CD8-positive, alpha-beta T cell (primary cell): ENCODE measurements at regions of chr2 and their contacts with region 1.

Region 1: DNA sequence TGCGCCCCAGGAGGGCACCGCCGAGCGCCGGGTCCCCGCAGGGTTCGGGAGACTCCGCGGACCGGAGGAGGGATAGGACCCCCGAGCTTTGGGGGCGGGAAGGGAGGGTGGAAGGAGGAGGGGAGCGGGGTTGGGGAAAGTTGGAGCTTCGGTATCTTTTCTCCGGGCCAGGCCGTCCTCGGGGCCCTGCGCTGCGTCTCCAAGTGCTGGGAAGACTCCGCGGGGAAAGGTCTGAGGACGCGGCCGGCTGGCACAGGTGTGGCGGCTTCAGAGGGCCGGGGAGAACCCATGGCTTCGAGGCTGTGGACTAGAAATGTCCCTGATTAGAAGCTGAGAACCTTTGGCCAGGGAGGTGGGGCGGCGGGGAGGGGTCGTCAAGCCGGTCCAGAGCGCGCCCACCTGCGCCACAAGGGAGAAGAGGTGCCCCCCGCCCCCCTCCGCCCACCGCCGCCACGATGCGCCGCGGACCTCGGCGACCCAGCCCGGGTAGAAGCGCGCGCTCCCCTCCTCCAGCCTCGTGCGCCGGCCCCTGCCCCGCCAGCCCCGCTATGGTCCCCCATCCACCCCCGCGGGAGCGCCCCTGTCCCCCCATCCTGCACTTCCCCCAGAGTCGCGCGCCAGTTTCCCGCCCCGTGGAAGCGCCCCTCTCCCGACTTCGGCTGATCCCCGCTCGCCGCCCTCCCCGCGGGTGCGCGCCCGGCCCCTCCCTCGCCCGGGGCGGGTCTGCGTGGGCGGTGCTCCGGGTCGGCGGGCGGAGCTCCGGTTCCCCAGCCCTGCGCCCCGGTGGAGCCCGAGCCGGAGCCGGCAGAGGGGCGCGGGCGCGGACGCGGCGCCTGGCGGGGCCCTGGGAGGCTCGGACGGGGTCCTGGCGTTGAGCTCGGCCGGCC is at the start of gene SNTG2:
- DNase-seq: peak; percentile 22 to 78 (median 58)
- ATAC-seq: peak; percentile 92
- H3K4me3 ChIP-seq: peak within 1 kb of the TSS; percentile 47 to 52
- H3K4me3 Mint-ChIP-seq: peak within 1 kb of the TSS; percentile 81
- H3K27ac ChIP-seq: no peak within 1 kb of the TSS
- H3K27ac Mint-ChIP-seq: no peak within 1 kb of the TSS
- H3K4me1 ChIP-seq: peaks cover 14% of the 10 kb centered on the region
- H3K4me1 Mint-ChIP-seq: peaks cover 38% of the 10 kb centered on the region
- H3K27me3 ChIP-seq: peaks cover 0 to 11% of the 10 kb centered on the region in 2 experiments
- H3K27me3 Mint-ChIP-seq: peaks cover 25% of the 10 kb centered on the region
- CTCF ChIP-seq: no peak
- total RNA-seq, gene SNTG2: 5.1 to 5.3 TPM

Region 2: DNA sequence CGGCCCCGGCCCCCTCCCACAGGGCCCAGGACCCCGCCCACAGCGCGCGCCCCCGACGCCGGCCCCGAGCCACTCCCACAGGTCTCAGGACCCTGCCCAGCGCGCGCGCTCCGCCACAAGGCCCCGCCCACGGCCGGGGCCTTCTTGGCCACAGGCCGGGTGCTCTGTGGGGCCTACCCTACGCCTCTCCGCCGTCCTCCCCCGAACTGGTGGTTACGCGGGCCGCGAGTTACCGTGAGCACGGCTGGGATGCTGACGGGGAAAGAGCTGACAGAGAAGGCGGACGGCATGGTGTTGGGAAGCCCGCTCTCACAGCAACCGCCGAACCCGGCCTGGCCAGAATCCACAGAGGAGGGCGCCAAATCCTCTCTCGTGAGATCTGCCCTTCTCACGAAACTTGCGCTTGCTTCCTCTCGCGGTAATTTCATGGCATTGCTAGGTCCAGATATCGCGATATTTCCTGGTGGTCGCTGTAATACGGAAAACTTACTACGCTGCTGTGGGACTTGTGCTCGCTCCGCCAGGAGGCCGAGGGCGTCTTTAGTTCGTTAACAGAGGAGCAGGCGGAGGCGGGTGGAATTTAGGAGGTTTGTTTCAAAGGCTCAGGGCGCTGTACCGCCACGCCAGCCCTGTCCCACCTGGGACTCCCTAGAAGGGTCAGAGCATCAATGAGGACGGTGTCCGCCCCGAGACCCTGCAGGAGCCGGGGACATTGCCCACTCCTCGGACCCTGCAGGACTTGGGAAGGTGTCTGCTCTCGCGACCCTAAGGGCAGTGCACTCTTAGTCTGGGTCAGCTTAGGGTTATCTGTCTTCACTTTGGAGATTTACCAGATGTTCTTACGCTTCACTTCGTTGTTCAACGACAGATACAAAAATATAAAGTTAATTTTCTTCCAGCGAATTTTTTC is 273.0 kb before region 1 on chr2 and contains the start of gene TMEM18:
- CTCF ChIA-PET with region 1: no interaction called
- POLR2A ChIA-PET with region 1: no interaction called
- intact Hi-C with region 1: loop called (anchors 2 kb)
- DNase-seq: peak in 7 of 9 experiments; percentile 80 to 99 (median 98)
- ATAC-seq: peak; percentile 82
- H3K4me3 ChIP-seq: peak within 1 kb of the TSS; percentile 90 to 95
- H3K4me3 Mint-ChIP-seq: peak within 1 kb of the TSS; percentile 95
- H3K27ac ChIP-seq: peak within 1 kb of the TSS; percentile 96 to 100
- H3K27ac Mint-ChIP-seq: peak within 1 kb of the TSS; percentile 99
- H3K4me1 ChIP-seq: peaks cover 19% of the 10 kb centered on the region
- H3K4me1 Mint-ChIP-seq: peaks cover 42% of the 10 kb centered on the region
- H3K27me3 ChIP-seq: no peaks in the 10 kb centered on the region
- H3K27me3 Mint-ChIP-seq: no peaks in the 10 kb centered on the region
- CTCF ChIP-seq: peak; percentile 38
- total RNA-seq, gene TMEM18: 30.7 to 33.6 TPM

Region 3: GRCh38 chr2:789529-789928 is 160.8 kb before region 1 on chr2:
- CTCF ChIA-PET with region 1: no interaction called
- POLR2A ChIA-PET with region 1: no interaction called
- intact Hi-C with region 1: no loop called
- DNase-seq: no peak
- ATAC-seq: no peak
- H3K4me3 ChIP-seq: no peak overlapping the region
- H3K4me3 Mint-ChIP-seq: no peak overlapping the region
- H3K27ac ChIP-seq: no peak overlapping the region
- H3K27ac Mint-ChIP-seq: no peak overlapping the region
- H3K4me1 ChIP-seq: no peaks in the 10 kb centered on the region
- H3K4me1 Mint-ChIP-seq: no peaks in the 10 kb centered on the region
- H3K27me3 ChIP-seq: no peaks in the 10 kb centered on the region
- H3K27me3 Mint-ChIP-seq: no peaks in the 10 kb centered on the region
- CTCF ChIP-seq: no peak

Region 4: GRCh38 chr2:974502-974901 is 24.2 kb after region 1 on chr2:
- CTCF ChIA-PET with region 1: interaction called, 7 read pairs
- POLR2A ChIA-PET with region 1: interaction called, 13 read pairs
- intact Hi-C with region 1: loop called in 1 of 2 experiments (anchors 2 kb)
- DNase-seq: peak in 2 of 9 experiments; percentile 21 to 57
- ATAC-seq: peak; percentile 34
- H3K4me3 ChIP-seq: peak overlapping the region; percentile 27 to 47
- H3K4me3 Mint-ChIP-seq: peak overlapping the region; percentile 78
- H3K27ac ChIP-seq: peak overlapping the region; percentile 51 to 53
- H3K27ac Mint-ChIP-seq: peak overlapping the region; percentile 87
- H3K4me1 ChIP-seq: peaks cover 39% of the 10 kb centered on the region
- H3K4me1 Mint-ChIP-seq: peaks cover 74% of the 10 kb centered on the region
- H3K27me3 ChIP-seq: no peaks in the 10 kb centered on the region
- H3K27me3 Mint-ChIP-seq: no peaks in the 10 kb centered on the region
- CTCF ChIP-seq: no peak

Region 5: GRCh38 chr2:985317-985898 is 35.1 kb after region 1 on chr2:
- CTCF ChIA-PET with region 1: interaction called, 5 read pairs
- POLR2A ChIA-PET with region 1: interaction called, 5 read pairs
- intact Hi-C with region 1: loop called in 1 of 2 experiments (anchors 5 kb)
- DNase-seq: peak in 3 of 9 experiments; percentile 28 to 69 (median 50)
- ATAC-seq: peak; percentile 89
- H3K4me3 ChIP-seq: peak overlapping the region in 1 of 2 experiments; percentile 15
- H3K4me3 Mint-ChIP-seq: peak overlapping the region; percentile 64
- H3K27ac ChIP-seq: peak overlapping the region in 1 of 2 experiments; percentile 16
- H3K27ac Mint-ChIP-seq: peak overlapping the region; percentile 88
- H3K4me1 ChIP-seq: peaks cover 12% of the 10 kb centered on the region
- H3K4me1 Mint-ChIP-seq: peaks cover 33% of the 10 kb centered on the region
- H3K27me3 ChIP-seq: no peaks in the 10 kb centered on the region
- H3K27me3 Mint-ChIP-seq: peaks cover 3% of the 10 kb centered on the region
- CTCF ChIP-seq: no peak

Region 6: DNA sequence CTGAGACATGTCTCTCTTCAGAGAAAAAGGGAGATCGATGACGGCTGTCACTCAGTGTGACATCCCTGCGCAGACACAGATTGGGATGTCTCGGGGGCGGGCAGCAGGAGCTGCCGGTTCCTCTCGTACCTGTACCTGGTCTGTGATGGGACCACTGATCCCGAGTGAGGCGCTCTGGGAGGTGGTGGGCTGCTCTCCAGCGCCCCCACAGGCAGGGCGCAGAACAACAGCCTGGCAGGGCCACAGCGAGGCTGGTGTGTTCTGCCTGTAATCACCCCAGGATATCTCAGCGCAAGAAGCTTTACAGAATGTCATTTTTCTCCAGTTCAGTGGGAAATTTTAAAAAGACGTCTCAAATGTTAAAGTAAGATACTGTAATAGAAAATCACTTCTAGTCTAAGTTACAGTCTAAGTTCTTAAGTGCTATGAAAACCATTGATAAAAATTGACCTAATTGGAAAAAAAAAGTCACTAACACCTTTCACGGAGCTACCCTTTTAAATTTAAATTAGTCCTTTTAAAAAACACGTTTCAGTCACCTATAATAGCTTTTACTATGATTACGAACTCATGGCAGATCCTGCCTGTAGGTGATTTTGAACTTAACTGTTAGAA is 190.2 kb after region 1 on chr2:
- CTCF ChIA-PET with region 1: interaction called, 6 read pairs
- POLR2A ChIA-PET with region 1: interaction called, 3 read pairs
- intact Hi-C with region 1: loop called in 1 of 2 experiments (anchors 5 kb)
- DNase-seq: peak in 8 of 9 experiments; percentile 24 to 74 (median 53)
- ATAC-seq: peak; percentile 87
- H3K4me3 ChIP-seq: no peak overlapping the region
- H3K4me3 Mint-ChIP-seq: no peak overlapping the region
- H3K27ac ChIP-seq: no peak overlapping the region
- H3K27ac Mint-ChIP-seq: no peak overlapping the region
- H3K4me1 ChIP-seq: no peaks in the 10 kb centered on the region
- H3K4me1 Mint-ChIP-seq: peaks cover 11% of the 10 kb centered on the region
- H3K27me3 ChIP-seq: no peaks in the 10 kb centered on the region
- H3K27me3 Mint-ChIP-seq: no peaks in the 10 kb centered on the region
- CTCF ChIP-seq: peak; percentile 99